MCF 10A (cell line): ENCODE measurements at regions of chr4 and their contacts with region 1.

Region 1: DNA sequence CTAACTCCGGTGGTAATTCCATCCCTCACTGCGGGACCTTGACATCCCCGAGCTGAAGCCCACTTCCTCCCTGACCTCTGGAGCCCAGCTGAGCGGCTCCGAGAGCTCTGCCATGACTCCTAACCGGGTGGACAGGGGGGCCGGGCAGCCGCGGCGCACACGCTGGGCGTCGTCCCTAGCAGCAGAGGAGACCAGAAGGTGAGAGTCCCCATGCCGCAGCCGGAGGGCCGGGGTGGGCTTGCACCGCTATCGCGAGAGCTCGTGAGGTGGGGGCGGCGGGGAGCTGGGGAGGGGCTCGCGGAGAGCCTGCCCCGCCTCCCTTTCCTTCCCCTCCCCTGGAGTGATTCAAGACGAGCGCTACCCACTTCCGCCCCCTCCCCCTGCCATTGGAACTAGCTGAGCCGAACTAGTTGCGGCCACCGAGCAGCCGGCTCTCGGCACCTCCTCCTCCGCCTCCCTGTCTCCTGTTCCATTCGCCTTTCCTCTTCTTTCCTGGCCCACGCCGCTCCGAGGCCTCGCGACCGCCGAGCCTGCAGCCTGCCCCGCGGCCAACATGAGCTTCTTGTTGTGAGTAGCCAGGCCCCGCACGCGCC is at the start of gene MOB1B:
- DNase-seq: peak; percentile 82
- H3K4me3 Mint-ChIP-seq: peak within 1 kb of the TSS; percentile 85
- H3K27ac Mint-ChIP-seq: peak within 1 kb of the TSS; percentile 68
- H3K4me1 Mint-ChIP-seq: peaks cover 9% of the 10 kb centered on the region
- H3K27me3 Mint-ChIP-seq: no peaks in the 10 kb centered on the region
- CTCF ChIP-seq: peak; percentile 35
- total RNA-seq, gene MOB1B: 16.1 and 19.9 TPM in 2 replicates

Region 2: GRCh38 chr4:70993181-70994068 is 91.3 kb after region 1 on chr4 and contains the start of gene DCK:
- CTCF ChIA-PET with region 1: interaction called, 4 read pairs
- POLR2A ChIA-PET with region 1: interaction called, 22 read pairs
- intact Hi-C with region 1: loop called (anchors 5 kb)
- DNase-seq: peak; percentile 92
- H3K4me3 Mint-ChIP-seq: peak within 1 kb of the TSS; percentile 85
- H3K27ac Mint-ChIP-seq: peak within 1 kb of the TSS; percentile 85
- H3K4me1 Mint-ChIP-seq: peaks cover 26% of the 10 kb centered on the region
- H3K27me3 Mint-ChIP-seq: no peaks in the 10 kb centered on the region
- CTCF ChIP-seq: no peak
- total RNA-seq, gene DCK: 8.0 and 9.5 TPM in 2 replicates